Dendritic cell treated with granulocyte-macrophage colony-stimulating factor and Interleukin-4, amounts not matched to agents 40 ng/mL and 50 ng/mL, for 4 days (primary cell): ENCODE measurements at regions of chr20 and their contacts with region 1.

Region 1: DNA sequence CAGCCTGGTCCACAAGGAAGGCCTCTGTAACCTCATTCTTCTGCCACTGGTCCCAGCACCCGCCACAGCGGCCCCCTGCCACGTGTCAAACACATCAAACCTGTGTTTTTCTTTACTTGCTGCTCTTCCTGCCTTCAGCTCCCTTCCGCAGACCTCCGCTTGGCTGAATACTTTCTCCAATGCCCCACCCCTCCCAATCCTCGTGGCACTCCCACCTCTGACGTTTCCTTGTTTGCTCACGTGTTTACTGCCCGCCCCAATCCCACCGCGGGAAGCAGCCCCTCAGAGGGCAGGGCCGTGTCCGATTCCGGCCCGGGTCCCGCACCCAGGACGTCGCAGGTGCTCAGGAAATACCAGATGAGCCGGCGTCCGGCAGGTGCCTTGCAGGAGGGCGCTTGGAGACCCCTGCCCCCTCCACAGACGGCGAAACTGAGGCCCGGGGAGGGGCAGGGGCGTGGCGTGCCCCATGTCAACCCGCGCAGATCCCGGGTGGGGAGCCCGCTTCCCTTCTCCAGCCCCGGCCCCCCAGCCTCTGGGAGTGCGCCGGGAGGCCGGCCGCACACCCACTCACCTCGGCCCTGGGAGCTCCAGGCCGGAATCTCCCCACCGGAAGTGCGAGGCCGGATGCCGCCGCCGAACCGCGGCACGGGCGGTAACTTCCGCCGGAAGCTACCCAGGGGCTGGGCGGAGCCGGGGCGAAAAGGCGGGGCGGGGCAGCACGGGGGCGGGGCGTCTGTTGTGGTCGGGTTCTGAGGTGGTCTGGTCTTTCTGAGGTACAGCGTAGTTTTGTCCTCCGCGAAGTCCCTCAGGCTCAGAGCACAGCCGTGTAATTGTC is 42.4 kb downstream of the ELMO2 start:
- H3K4me3 Mint-ChIP-seq: peak overlapping the region; percentile 90
- H3K27ac Mint-ChIP-seq: peak overlapping the region; percentile 84
- H3K4me1 Mint-ChIP-seq: peaks cover 43% of the 10 kb centered on the region
- H3K27me3 Mint-ChIP-seq: no peaks in the 10 kb centered on the region

Region 2: DNA sequence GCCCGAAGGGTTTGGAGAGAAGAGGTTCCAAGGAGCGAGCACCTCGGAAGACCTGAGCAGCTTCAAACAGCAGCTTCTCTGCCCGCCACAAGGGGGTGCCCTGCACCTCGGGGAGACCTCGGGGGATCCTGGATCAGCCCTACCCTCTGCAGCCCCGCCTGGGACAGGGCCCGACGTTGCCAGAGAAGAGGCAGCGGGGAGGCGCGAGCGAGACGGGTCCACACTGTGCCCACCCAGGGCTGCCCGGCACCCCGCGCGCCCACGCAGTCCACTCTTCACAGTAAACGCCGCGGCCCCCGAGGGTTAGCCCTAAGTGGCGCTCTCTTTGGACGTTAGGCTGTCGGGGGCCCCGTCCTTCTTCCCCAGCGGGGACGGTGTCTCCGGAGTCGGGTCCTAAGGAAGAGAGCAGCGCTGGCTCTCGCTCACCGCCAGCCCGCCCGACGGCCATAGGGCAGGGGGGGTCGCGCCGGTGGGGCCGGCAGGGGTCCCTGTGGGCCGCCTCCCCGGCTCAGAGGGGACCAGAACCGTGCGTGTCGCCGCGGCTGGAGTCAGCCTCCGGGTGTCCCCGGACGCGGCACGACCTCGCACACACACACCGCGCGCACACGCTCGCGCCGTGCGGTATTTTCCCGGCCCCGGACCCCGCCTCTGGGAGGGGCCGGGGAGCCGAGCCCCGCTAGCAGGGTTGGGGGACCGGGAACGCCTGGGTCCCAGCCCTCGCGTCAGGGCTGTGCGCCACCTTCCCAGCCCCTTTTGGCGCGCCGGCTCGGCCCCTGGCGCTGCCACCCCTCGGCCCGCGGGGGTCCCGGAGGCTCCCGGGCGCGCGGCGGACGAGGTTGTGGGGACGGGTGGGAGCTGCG is 56.6 kb before region 1 on chr20:
- intact Hi-C with region 1: no loop called
- H3K4me3 Mint-ChIP-seq: no peak overlapping the region
- H3K27ac Mint-ChIP-seq: no peak overlapping the region
- H3K4me1 Mint-ChIP-seq: peaks cover 9% of the 10 kb centered on the region
- H3K27me3 Mint-ChIP-seq: peaks cover 84% of the 10 kb centered on the region

Region 3: GRCh38 chr20:46406199-46406985 is 42.4 kb after region 1 on chr20 and contains the start of gene ELMO2:
- intact Hi-C with region 1: loop called (anchors 1 kb)
- H3K4me3 Mint-ChIP-seq: peak within 1 kb of the TSS; percentile 91
- H3K27ac Mint-ChIP-seq: peak within 1 kb of the TSS; percentile 91
- H3K4me1 Mint-ChIP-seq: peaks cover 69% of the 10 kb centered on the region
- H3K27me3 Mint-ChIP-seq: no peaks in the 10 kb centered on the region